WTC11 (cell line): ENCODE measurements at regions of chr2 and their contacts with region 1.

Region 1: DNA sequence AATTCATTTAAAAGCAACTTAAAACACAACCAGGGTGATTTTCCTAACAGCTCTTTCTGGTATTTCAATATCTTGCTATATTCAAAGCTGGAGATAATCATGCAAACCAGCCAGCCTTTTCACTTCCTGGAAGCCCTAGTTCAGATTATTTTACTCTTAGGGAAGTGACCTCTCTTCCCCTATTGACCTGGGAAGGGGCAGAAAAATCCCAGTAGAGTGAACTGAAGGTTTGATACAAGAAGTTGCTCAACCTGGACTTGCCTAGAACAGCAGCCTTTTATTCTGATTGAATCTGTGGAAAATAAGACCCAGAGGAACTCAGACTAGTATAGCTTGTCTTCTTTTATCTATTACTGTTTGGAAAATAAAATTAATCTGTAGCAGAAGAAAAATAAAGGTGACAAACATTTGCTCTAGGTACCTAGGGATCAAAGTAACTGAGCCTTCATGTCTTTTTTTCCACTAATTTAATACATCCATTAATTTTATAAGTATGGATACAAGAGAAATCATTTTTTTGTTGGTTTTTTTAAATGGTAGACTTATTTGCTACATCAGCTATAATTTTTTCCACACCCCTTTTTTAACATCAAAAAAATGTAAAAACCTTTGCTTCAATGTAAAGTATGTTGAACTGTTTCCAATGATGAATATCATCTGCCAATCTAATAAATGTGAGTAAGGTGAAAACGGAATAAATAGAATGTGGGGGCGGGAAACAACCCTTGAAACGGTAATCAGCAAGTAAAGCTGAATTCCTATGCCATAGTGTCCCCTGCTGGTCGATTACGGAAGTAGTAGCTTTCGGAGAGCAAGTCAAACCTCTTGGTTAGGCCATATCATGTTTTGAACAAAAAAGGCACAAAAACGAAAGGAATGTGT is 629.9 kb downstream of the NRXN1 start:
- DNase-seq: peak; percentile 79
- ATAC-seq: peak; percentile 78
- H3K4me3 Mint-ChIP-seq: no peak overlapping the region
- H3K27ac Mint-ChIP-seq: no peak overlapping the region
- H3K4me1 Mint-ChIP-seq: peaks cover 33% of the 10 kb centered on the region
- H3K27me3 Mint-ChIP-seq: no peaks in the 10 kb centered on the region
- CTCF ChIP-seq: peak; percentile 71

Region 2: DNA sequence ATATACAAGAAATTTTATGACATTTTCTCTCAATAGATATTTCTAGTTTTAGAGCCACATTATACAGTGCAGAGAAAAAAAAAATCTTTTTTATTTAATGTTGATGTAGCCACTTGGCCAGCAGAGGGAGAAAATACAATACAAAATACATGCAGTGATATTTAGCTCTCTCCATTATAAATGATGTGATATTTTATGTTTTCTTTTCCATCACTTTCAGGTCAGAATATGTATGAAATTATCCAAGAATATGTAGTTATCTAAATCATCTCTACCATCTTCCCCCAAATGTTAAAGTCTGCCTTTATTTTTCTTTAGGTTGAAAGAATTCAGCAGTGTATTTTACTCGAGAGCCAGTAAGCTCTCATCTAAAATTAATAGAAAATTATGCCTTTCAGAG is 714.1 kb before region 1 on chr2:
- CTCF ChIA-PET with region 1: interaction called, 15 read pairs
- POLR2A ChIA-PET with region 1: no interaction called
- DNase-seq: no peak
- ATAC-seq: 0 out of 2 replicates have a peak, but pooled peaks have one; percentile 24
- H3K4me3 Mint-ChIP-seq: no peak overlapping the region
- H3K27ac Mint-ChIP-seq: no peak overlapping the region
- H3K4me1 Mint-ChIP-seq: peaks cover 8% of the 10 kb centered on the region
- H3K27me3 Mint-ChIP-seq: no peaks in the 10 kb centered on the region
- CTCF ChIP-seq: no peak

Region 3: GRCh38 chr2:49959961-49960553 is 442.0 kb before region 1 on chr2:
- CTCF ChIA-PET with region 1: interaction called, 10 read pairs
- POLR2A ChIA-PET with region 1: no interaction called
- DNase-seq: no peak
- ATAC-seq: no peak
- H3K4me3 Mint-ChIP-seq: no peak overlapping the region
- H3K27ac Mint-ChIP-seq: no peak overlapping the region
- H3K4me1 Mint-ChIP-seq: peaks cover 26% of the 10 kb centered on the region
- H3K27me3 Mint-ChIP-seq: peaks cover 6% of the 10 kb centered on the region
- CTCF ChIP-seq: no peak

Region 4: GRCh38 chr2:50111067-50111466 is 290.9 kb before region 1 on chr2:
- CTCF ChIA-PET with region 1: no interaction called
- POLR2A ChIA-PET with region 1: no interaction called
- DNase-seq: no peak
- ATAC-seq: no peak
- H3K4me3 Mint-ChIP-seq: no peak overlapping the region
- H3K27ac Mint-ChIP-seq: no peak overlapping the region
- H3K4me1 Mint-ChIP-seq: peaks cover 6% of the 10 kb centered on the region
- H3K27me3 Mint-ChIP-seq: no peaks in the 10 kb centered on the region
- CTCF ChIP-seq: no peak

Region 5: DNA sequence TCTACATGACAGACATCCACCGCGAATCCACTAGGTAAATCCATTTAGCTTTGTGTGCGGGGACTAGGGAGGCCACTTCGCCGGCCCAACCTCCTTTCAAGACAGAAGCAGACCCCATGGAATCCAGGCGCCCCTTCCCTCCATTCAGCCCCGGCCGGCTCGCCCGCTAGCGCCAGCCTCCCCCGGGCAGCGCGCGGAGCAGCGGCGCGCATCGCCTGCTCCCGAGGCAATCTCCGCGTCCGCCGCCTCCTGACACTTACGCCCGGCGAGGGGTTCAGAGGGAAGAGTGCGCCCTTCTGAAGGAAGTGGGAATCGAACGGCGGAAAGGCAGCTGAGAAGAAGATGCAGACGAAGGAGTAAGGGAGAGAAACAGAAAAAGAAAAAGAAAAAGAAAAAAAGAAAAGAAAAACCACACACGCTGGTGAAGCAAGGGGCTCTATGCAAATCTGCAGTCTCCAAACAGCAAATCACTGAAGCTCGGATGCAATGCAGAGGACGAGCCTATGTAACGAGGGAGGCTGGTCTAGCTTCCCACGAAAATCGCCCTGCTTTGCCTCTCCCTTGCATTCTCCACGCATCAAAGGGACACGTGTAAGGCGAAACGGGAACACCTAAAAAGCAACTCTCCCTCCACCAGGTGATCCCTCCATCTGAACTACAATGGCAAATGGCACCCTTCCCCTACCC is 54.5 kb before region 1 on chr2:
- CTCF ChIA-PET with region 1: interaction called, 32 read pairs
- POLR2A ChIA-PET with region 1: no interaction called
- DNase-seq: peak; percentile 55
- ATAC-seq: peak; percentile 58
- H3K4me3 Mint-ChIP-seq: peak overlapping the region; percentile 84
- H3K27ac Mint-ChIP-seq: no peak overlapping the region
- H3K4me1 Mint-ChIP-seq: peaks cover 33% of the 10 kb centered on the region
- H3K27me3 Mint-ChIP-seq: peaks cover 60% of the 10 kb centered on the region
- CTCF ChIP-seq: no peak